ENCODE measurements at regions of chr17 and their contacts with region 1.

Region 1: DNA sequence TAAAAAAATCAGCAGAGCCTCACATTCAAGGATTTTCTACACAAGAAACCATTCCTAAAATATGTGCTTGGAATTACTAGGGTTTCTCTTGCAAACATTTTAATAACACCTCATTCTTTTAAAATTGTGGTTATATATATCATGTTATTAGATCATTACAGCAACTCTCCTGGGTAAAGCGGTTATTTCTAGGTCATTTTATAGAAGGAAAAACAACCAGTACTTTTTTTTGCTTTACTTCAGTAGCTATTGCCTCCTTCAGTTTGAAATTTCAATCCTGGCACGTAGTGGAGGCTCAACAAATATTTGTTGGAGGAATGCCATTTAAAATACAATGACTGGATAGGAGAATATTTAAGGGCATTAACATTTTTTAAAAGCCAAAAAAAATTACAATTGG is 220.6 kb downstream of the CDRT15L2 start:
- H3K4me3 Mint-ChIP-seq: no peak overlapping the region
- H3K27ac Mint-ChIP-seq: no peak overlapping the region
- H3K4me1 Mint-ChIP-seq: no peaks in the 10 kb centered on the region
- H3K27me3 Mint-ChIP-seq: peaks cover 2% of the 10 kb centered on the region

Region 2: GRCh38 chr17:20852239-20852989 is 52.3 kb after region 1 on chr17:
- intact Hi-C with region 1: loop called (anchors 5 kb)
- H3K4me3 Mint-ChIP-seq: peak overlapping the region; percentile 43
- H3K27ac Mint-ChIP-seq: no peak overlapping the region
- H3K4me1 Mint-ChIP-seq: peaks cover 13% of the 10 kb centered on the region
- H3K27me3 Mint-ChIP-seq: peaks cover 36% of the 10 kb centered on the region

Region 3: DNA sequence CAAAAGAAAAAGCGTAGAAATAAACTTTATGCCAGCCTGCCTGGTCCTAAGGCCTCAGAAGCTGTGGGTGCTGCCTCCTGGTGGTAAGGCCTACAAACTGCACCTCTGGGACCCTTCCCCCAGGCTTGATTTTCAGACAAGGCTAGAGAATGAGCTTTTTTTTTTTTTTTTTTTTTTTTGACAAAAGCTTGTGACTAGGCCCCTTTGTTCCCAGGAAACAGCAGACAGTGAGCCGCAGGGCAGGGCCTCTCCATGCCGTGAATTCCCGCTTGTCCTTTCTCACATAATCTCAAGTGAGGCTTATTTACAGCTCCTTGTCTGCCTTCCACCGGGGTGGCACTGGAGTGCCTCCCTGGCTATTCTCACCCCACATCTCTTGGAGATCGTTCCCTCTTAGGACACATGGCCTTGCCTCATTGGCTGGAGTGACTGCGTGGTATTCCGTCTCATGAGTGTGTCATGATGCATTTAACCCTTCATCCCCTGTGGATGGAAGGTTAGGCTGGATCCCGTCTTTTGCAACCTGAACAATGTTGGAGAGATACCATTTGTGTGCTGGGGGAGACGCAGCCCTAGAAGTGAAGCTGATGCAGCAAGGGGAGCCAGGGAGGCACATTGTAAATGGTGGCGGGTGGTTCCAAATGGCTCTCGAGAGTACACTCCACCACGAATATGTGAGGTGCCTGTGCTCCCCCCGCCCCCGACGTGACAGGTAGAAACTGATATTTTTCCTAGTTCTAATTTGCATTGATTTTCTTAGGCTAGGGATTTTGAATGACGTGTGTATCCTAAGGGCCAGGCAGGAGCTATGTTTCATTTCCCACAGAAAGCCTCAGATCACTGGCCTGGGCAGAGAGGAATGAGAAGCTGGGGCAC is 193.1 kb after region 1 on chr17:
- intact Hi-C with region 1: loop called (anchors 2 kb)
- H3K4me3 Mint-ChIP-seq: no peak overlapping the region
- H3K27ac Mint-ChIP-seq: no peak overlapping the region
- H3K4me1 Mint-ChIP-seq: no peaks in the 10 kb centered on the region
- H3K27me3 Mint-ChIP-seq: peaks cover 11% of the 10 kb centered on the region

Region 4: GRCh38 chr17:21113716-21114115 is 313.6 kb after region 1 on chr17:
- intact Hi-C with region 1: no loop called
- H3K4me3 Mint-ChIP-seq: no peak overlapping the region
- H3K27ac Mint-ChIP-seq: peak overlapping the region; percentile 58
- H3K4me1 Mint-ChIP-seq: peaks cover 33% of the 10 kb centered on the region
- H3K27me3 Mint-ChIP-seq: peaks cover 2% of the 10 kb centered on the region

Measured in dendritic cell treated with granulocyte-macrophage colony-stimulating factor and Interleukin-4, amounts not matched to agents 40 ng/mL and 50 ng/mL, for 4 days (primary cell).